WTC11 (cell line): ENCODE measurements at regions of chr1 and their contacts with region 1.

Region 1: DNA sequence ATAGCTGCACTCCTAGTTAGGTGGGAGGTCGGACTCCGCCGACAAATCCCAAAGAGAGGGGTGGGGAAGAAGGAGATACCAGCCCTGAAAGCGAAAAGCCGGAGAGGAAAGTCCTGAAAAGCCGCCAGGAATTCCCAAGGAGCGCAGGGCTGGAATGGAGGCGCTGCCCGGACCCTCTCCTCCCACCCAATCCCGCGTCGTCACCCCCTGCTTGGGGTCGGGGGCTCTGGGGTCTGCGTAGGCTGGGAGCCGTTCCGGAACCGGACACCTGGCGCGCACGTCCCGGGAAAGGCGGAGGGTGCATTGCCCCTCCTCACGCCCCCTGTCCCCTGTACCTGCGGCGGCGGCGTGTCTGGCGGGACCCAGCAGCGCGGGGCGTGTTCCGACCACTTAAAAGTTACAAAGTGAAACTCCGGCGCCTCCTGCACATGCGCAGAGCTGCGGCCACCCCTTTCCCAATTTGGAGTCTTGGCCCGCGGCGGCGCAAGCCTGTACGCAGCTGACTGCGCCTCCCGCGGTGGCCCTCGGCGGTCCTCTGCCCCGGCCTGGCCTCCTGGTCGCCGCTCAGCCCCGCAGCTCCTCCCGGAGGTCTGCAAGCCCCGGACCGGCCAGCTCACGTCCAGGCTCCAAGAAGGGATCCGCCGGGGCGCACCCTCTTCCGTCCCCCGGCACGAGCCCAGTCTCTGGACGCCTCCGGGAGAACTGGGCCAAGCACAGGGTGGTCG is at the start of gene TMEM63A:
- DNase-seq: peak; percentile 94
- ATAC-seq: peak; percentile 30
- H3K4me3 Mint-ChIP-seq: peak within 1 kb of the TSS; percentile 77
- H3K27ac Mint-ChIP-seq: peak within 1 kb of the TSS; percentile 85
- H3K4me1 Mint-ChIP-seq: peaks cover 54% of the 10 kb centered on the region
- H3K27me3 Mint-ChIP-seq: no peaks in the 10 kb centered on the region; the same call in 1 of the 2 replicates
- CTCF ChIP-seq: no peak
- total RNA-seq, gene TMEM63A: 61.1 to 91.7 TPM (median 69.3 TPM) in 3 replicates

Region 2: GRCh38 chr1:225710804-225711203 is 171.3 kb before region 1 on chr1:
- CTCF ChIA-PET with region 1: no interaction called
- POLR2A ChIA-PET with region 1: no interaction called
- DNase-seq: no peak
- ATAC-seq: peak; percentile 26
- H3K4me3 Mint-ChIP-seq: no peak overlapping the region
- H3K27ac Mint-ChIP-seq: no peak overlapping the region
- H3K4me1 Mint-ChIP-seq: peaks cover 9% of the 10 kb centered on the region
- H3K27me3 Mint-ChIP-seq: no peaks in the 10 kb centered on the region; the same call in 1 of the 2 replicates
- CTCF ChIP-seq: no peak

Region 3: DNA sequence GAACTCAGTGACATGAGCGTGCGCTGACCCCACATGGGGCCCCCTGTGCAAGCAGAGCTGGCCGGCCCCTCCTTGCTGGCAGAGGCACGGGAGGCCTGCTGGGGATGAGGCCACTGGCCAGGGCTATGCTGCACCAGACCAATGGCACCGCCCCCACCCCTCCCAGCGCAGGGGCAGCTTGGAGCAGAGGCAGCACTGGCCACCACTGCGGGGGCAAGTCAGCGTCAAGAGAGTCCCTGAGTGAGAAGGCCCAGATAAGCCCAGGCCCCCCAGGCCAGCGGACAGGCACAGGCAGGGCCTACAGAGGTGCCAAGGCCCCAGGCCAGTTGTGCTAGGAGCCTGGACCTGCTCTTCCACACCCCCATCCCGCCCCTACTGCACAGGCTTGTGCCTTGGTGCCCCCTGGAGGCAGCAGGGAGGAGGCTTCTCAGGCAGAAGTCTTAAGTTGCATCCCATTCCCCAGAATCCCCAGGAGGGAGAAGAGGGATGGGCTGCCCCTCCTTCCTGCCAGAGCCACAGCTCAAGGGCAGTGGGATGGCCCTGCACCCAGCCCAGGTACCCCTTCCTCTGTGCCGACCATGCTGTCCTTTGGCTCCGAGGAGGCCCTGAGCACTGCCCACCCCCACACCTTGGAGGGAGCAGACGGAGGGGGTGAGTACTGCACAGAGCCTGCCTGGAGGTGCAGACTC is 36.4 kb before region 1 on chr1:
- CTCF ChIA-PET with region 1: interaction called, 13 read pairs
- POLR2A ChIA-PET with region 1: interaction called, 3 read pairs
- DNase-seq: peak; percentile 90
- ATAC-seq: peak; percentile 82
- H3K4me3 Mint-ChIP-seq: no peak overlapping the region
- H3K27ac Mint-ChIP-seq: peak overlapping the region; percentile 87
- H3K4me1 Mint-ChIP-seq: peaks cover 12% of the 10 kb centered on the region
- H3K27me3 Mint-ChIP-seq: no peaks in the 10 kb centered on the region
- CTCF ChIP-seq: peak; percentile 61

Region 4: DNA sequence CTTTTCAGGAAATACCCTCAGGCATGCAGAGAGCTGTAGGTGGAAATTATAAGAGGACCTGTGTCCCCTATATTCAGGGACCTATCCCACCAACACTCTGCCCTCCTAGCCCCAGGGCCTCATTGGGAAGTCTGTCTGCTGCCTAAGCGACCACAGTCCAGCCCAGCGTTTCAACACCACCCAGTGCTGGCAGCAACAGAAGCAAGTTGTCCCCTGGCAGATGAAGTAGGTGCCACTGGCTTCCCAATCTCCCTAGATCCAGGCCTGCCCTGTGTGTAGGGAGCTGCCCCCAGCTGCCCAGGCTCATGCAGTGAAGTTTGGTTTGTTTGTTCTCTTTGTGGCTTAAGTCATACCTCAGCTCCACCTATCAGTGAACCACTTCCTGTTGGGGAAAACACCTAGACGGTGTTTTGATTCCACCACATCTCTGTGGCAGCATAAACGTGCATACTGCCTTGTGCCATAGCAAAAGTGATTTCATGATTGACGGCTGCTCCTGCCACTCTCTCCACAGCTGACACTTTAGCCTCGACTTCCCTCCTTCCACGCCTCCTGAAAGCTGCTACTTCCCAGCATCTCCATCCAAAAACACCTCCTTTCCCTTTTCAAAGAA is 14.9 kb after region 1 on chr1:
- CTCF ChIA-PET with region 1: interaction called, 30 read pairs
- POLR2A ChIA-PET with region 1: interaction called, 10 read pairs
- DNase-seq: no peak
- ATAC-seq: no peak
- H3K4me3 Mint-ChIP-seq: no peak overlapping the region
- H3K27ac Mint-ChIP-seq: no peak overlapping the region
- H3K4me1 Mint-ChIP-seq: peaks cover 43% of the 10 kb centered on the region
- H3K27me3 Mint-ChIP-seq: peaks cover 11% of the 10 kb centered on the region; the same call in 1 of the 2 replicates
- CTCF ChIP-seq: no peak

Region 5: GRCh38 chr1:225923692-225924555 is 41.8 kb after region 1 on chr1 and contains the start of gene PYCR2:
- CTCF ChIA-PET with region 1: interaction called, 4 read pairs
- POLR2A ChIA-PET with region 1: interaction called, 10 read pairs
- DNase-seq: peak; percentile 95
- ATAC-seq: peak; percentile 95
- H3K4me3 Mint-ChIP-seq: peak within 1 kb of the TSS; percentile 92
- H3K27ac Mint-ChIP-seq: peak within 1 kb of the TSS; percentile 84
- H3K4me1 Mint-ChIP-seq: peaks cover 23% of the 10 kb centered on the region
- H3K27me3 Mint-ChIP-seq: no peaks in the 10 kb centered on the region
- CTCF ChIP-seq: no peak
- total RNA-seq, gene PYCR2: 81.5 to 90.3 TPM (median 86.0 TPM) in 3 replicates

Region 6: GRCh38 chr1:225953315-225953714 is 71.2 kb after region 1 on chr1:
- CTCF ChIA-PET with region 1: no interaction called
- POLR2A ChIA-PET with region 1: no interaction called
- DNase-seq: no peak
- ATAC-seq: no peak
- H3K4me3 Mint-ChIP-seq: no peak overlapping the region
- H3K27ac Mint-ChIP-seq: no peak overlapping the region
- H3K4me1 Mint-ChIP-seq: peaks cover 25% of the 10 kb centered on the region
- H3K27me3 Mint-ChIP-seq: peaks cover 91% of the 10 kb centered on the region
- CTCF ChIP-seq: no peak

Region 7: GRCh38 chr1:226100436-226101391 is 218.6 kb after region 1 on chr1:
- CTCF ChIA-PET with region 1: no interaction called
- POLR2A ChIA-PET with region 1: no interaction called
- DNase-seq: peak; percentile 61
- ATAC-seq: peak; percentile 47
- H3K4me3 Mint-ChIP-seq: peak overlapping the region; percentile 76
- H3K27ac Mint-ChIP-seq: no peak overlapping the region
- H3K4me1 Mint-ChIP-seq: peaks cover 39% of the 10 kb centered on the region
- H3K27me3 Mint-ChIP-seq: peaks cover 17% of the 10 kb centered on the region
- CTCF ChIP-seq: no peak